Naive thymus-derived CD8-positive, alpha-beta T cell (primary cell): ENCODE measurements at regions of chr19 and their contacts with region 1.

Region 1: GRCh38 chr19:52823676-52824075 is 2.2 kb upstream of the ZNF28 start:
- DNase-seq: no peak
- ATAC-seq: no peak
- H3K4me3 Mint-ChIP-seq: no peak overlapping the region
- H3K27ac Mint-ChIP-seq: no peak overlapping the region
- H3K4me1 Mint-ChIP-seq: peaks cover 9 to 18% (median 12%) of the 10 kb centered on the region in 4 donors
- H3K27me3 Mint-ChIP-seq: no peaks in the 10 kb centered on the region

Region 2: DNA sequence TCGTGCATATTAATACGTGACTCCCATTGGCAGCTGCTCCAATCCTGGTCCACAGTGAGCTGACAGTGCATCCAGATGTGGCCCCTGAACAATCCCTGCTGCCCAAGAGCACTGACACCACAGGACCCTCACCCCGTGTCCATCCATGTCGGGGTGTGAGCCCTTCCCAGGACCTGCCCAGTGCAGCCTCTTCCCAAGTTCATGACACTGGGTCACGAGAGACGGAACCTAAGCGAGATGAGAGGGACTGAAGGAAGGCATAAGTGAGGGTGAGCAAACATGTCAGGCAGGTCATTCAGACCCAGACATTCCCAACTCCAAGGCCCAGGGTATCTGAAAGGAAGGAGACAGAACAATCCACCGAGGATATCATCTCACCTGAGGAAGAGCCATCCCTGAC is 30.2 kb after region 1 on chr19:
- POLR2A ChIA-PET with region 1: interaction called, 11 read pairs
- DNase-seq: no peak
- ATAC-seq: no peak
- H3K4me3 Mint-ChIP-seq: peak overlapping the region in 4 of 10 donors; percentile 14 to 56 (median 34)
- H3K27ac Mint-ChIP-seq: peak overlapping the region in 1 of 10 donors; percentile 50
- H3K4me1 Mint-ChIP-seq: peaks cover 15 to 32% (median 30%) of the 10 kb centered on the region in 4 donors
- H3K27me3 Mint-ChIP-seq: no peaks in the 10 kb centered on the region

Region 3: DNA sequence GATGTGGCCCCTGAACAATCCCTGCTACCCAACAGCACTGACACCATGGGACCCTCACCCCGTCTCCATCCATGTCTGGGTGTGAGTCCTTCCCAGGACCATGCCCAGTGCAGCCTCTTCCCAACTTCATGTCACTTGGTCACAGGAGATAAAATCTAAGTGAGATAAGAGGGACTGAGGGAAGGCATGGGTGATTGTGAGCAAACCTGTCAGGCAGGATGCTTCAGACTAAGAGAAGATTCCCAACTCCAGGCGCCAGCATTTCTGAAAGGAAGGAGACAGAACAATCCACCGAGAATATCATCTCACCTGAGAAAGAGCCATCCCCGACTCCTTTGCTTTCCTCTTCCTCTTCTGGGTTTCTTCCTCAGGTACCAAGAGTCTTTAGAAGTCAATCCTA is 66.3 kb after region 1 on chr19:
- POLR2A ChIA-PET with region 1: no interaction called
- DNase-seq: no peak
- ATAC-seq: no peak
- H3K4me3 Mint-ChIP-seq: no peak overlapping the region
- H3K27ac Mint-ChIP-seq: peak overlapping the region in 1 of 10 donors; percentile 79
- H3K4me1 Mint-ChIP-seq: peaks cover 6 to 28% (median 10%) of the 10 kb centered on the region in 4 donors
- H3K27me3 Mint-ChIP-seq: no peaks in the 10 kb centered on the region